Activated B cell treated with CpG ODN at 0.5 μM for 24 hours (primary cell): ENCODE measurements at regions of chr3 and their contacts with region 1.

Region 1: DNA sequence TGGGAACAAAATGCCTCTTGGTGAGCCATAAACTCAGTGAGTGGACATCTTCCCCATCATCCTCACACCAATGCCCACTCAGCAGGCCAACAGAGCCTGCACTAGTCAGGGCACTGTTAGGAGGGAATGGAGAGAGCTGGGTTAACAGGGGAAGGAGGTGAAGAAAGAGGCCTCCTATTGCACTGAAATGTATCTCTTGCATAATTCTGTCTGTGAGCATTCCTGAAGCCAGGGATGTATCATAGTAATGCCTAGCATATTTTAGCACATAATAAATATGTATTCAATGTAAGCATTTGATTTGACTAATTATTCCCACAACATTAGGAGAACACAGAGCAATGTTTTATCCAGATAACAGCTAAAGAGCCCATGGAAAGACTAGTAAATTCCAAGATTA is 81.2 kb downstream of the ANO10 start:
- DNase-seq: no peak
- ATAC-seq: no peak
- H3K4me3 Mint-ChIP-seq: no peak overlapping the region
- H3K27ac Mint-ChIP-seq: no peak overlapping the region
- H3K4me1 Mint-ChIP-seq: no peaks in the 10 kb centered on the region
- H3K27me3 Mint-ChIP-seq: no peaks in the 10 kb centered on the region
- CTCF ChIP-seq: no peak

Region 2: DNA sequence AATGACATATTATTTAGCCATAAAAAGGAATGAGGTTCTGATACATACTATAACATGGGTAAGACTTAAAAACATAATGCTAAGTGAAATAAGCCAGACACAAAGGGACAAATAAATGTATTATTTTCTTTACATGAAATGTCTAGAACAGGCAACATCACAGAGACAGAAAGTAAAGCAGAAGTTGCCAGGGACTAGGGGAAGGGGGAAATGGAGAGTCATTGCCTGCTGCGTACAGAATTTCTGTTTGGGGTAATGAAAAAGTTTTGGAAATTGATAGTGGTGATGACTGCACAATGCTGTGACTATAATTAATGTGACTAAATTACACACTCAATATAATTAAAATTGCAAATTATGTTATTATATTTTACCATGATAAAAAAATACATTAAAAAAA is 18.7 kb before region 1 on chr3:
- CTCF ChIA-PET with region 1: no interaction called
- POLR2A ChIA-PET with region 1: no interaction called
- intact Hi-C with region 1: no loop called
- DNase-seq: no peak
- ATAC-seq: no peak
- H3K4me3 Mint-ChIP-seq: no peak overlapping the region
- H3K27ac Mint-ChIP-seq: no peak overlapping the region
- H3K4me1 Mint-ChIP-seq: no peaks in the 10 kb centered on the region
- H3K27me3 Mint-ChIP-seq: no peaks in the 10 kb centered on the region
- CTCF ChIP-seq: no peak

Region 3: DNA sequence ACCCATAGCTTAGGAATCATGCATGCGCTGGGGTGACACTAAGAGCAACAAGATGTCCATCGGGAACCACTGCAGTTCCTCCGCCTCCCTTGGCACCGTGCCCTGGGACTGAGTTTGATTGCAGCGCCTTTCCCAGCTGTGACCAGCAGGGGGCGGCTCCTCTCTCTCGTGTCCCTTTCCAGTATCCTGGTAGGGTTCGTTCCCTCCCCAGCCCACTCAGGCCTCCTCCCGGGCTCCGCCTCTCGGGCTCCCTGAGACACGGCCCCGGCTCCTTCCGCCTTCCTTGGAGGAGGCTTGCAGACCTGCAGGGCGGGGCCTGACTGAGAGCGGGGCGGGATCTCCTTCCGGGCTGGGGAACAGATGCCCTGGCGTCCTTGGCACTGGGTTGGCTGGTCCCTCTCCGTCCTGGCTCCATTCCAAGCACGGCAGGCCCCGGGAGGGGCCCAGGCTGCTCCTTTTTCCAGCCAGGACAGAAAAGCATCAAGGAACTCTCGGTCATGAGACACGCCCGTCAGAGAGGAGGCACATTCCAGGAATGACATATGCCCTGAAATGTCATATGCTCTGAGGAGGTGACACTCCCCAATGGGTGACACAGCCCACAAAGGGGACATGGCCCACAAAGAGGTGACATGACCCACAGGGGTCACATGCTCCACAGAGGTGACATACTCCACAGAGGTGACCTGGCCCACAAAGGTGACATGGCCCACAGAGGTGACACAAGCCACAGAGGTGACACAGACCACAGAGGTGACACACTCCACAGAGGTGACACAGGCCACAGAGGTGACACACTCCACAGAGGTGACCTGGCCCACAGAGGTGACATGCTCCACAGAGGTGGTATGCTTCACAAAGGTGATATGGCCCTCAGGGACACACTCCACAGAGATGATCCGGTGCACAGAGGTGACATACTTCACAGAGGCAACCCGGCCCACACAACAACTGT is 229.1 kb after region 1 on chr3:
- CTCF ChIA-PET with region 1: no interaction called
- POLR2A ChIA-PET with region 1: no interaction called
- intact Hi-C with region 1: loop called (anchors 1 kb)
- DNase-seq: peak; percentile 63
- ATAC-seq: peak; percentile 54
- H3K4me3 Mint-ChIP-seq: no peak overlapping the region
- H3K27ac Mint-ChIP-seq: no peak overlapping the region
- H3K4me1 Mint-ChIP-seq: peaks cover 4% of the 10 kb centered on the region
- H3K27me3 Mint-ChIP-seq: peaks cover 19% of the 10 kb centered on the region
- CTCF ChIP-seq: no peak

Region 4: DNA sequence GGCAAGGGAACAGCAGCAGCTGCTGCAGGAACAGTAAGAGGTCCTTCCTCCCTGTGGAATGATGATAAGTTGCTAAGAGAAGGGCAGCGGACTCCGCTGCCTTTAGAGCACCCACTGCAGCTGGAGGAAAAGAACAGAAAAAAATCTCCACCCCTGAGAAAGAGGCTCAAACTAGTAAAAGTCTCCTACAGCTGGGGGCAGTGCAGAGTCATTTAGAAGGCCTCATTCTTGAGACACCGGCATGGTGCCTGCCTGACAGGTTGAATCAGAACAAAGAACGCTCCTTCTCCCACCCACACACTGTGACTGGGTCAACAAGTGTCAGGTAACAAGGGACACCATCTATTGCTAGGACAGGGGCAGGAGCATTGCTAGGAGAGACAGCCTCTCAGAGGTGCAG is 338.5 kb after region 1 on chr3:
- CTCF ChIA-PET with region 1: no interaction called
- POLR2A ChIA-PET with region 1: no interaction called
- intact Hi-C with region 1: loop called (anchors 1 kb)
- DNase-seq: no peak
- ATAC-seq: no peak
- H3K4me3 Mint-ChIP-seq: no peak overlapping the region
- H3K27ac Mint-ChIP-seq: no peak overlapping the region
- H3K4me1 Mint-ChIP-seq: no peaks in the 10 kb centered on the region
- H3K27me3 Mint-ChIP-seq: peaks cover 2% of the 10 kb centered on the region
- CTCF ChIP-seq: no peak

Region 5: GRCh38 chr3:44114142-44114541 is 573.5 kb after region 1 on chr3:
- CTCF ChIA-PET with region 1: interaction called, 3 read pairs
- POLR2A ChIA-PET with region 1: no interaction called
- intact Hi-C with region 1: loop called (anchors 1 kb)
- DNase-seq: peak; percentile 43
- ATAC-seq: peak; percentile 72
- H3K4me3 Mint-ChIP-seq: no peak overlapping the region
- H3K27ac Mint-ChIP-seq: no peak overlapping the region
- H3K4me1 Mint-ChIP-seq: no peaks in the 10 kb centered on the region
- H3K27me3 Mint-ChIP-seq: peaks cover 7% of the 10 kb centered on the region
- CTCF ChIP-seq: no peak

Region 6: GRCh38 chr3:44235604-44236484 is 695.2 kb after region 1 on chr3:
- CTCF ChIA-PET with region 1: no interaction called
- POLR2A ChIA-PET with region 1: no interaction called
- intact Hi-C with region 1: loop called (anchors 1 kb)
- DNase-seq: no peak
- ATAC-seq: peak; percentile 66
- H3K4me3 Mint-ChIP-seq: no peak overlapping the region
- H3K27ac Mint-ChIP-seq: no peak overlapping the region
- H3K4me1 Mint-ChIP-seq: peaks cover 4% of the 10 kb centered on the region
- H3K27me3 Mint-ChIP-seq: peaks cover 10% of the 10 kb centered on the region
- CTCF ChIP-seq: peak; percentile 64